Activated T-helper 2 cell treated with anti-CD3 and anti-CD28 coated beads, Interferon-gamma antibody, Interleukin-2, Interleukin-4, amounts not matched to agents 10 μg/mL and 5 μg/mL and 100 μg/mL, durations not matched to agents 14 hours and 24 hours and 36 hours (primary cell): ENCODE measurements at regions of chr2 and their contacts with region 1.

Region 1: GRCh38 chr2:197255543-197255942 is 55.0 kb downstream of the ANKRD44 start:
- DNase-seq: peak; percentile 68
- H3K4me3 Mint-ChIP-seq: peak overlapping the region; percentile 80
- H3K27ac Mint-ChIP-seq: peak overlapping the region; percentile 100
- H3K4me1 Mint-ChIP-seq: peaks cover 64% of the 10 kb centered on the region
- H3K27me3 Mint-ChIP-seq: no peaks in the 10 kb centered on the region

Region 2: DNA sequence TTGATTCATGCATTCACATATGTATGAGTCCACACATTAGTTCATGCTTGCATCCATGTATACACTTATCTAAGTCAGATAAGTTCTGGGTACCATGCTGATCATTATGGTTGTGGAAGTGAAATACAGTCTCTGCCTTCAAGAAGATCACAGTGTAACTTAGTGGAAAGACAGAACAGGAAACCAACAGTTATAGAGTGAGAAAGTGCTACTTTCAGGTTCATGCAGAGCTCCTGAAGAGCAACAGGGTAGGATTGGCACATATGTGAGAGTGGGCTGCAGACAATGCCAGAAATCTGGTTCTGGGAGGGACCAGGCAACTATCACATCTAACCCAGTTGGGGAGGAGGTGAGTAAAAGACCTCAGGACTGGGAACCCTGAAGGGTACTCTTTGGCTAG is 293.7 kb before region 1 on chr2:
- intact Hi-C with region 1: no loop called
- DNase-seq: no peak
- H3K4me3 Mint-ChIP-seq: no peak overlapping the region
- H3K27ac Mint-ChIP-seq: peak overlapping the region; percentile 72
- H3K4me1 Mint-ChIP-seq: peaks cover 34% of the 10 kb centered on the region
- H3K27me3 Mint-ChIP-seq: no peaks in the 10 kb centered on the region

Region 3: DNA sequence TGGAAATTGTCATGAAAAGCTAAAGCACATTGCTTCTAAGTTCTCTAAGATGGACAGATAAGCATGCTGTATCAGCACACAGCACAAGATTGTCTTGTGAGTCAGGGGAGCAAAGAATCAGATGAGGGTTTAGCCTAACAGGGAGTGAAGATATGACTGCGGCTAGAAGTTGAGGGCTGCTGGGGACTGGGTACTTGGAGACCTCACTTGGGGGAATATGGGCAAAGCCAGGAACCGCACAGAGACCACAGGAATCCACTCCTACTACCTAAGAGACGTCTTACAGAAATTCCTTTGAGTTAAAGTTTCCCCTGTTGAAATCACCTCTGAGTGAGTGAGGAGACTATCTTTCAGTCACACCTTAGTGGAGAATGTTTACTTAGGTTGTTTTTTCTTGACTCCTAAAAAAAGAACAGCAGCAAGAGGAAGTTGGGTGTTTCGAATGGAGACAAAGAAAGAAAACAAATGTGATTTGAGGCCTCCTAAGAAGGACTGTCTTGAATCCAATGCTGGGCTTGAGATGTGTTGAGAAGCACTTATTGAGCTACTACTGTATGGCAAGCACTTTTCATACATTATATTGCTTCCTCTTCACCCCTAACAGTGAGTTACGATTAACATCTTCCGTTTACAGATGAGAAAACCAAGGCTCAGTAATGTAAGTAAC is 45.7 kb before region 1 on chr2:
- intact Hi-C with region 1: loop called (anchors 2 kb)
- DNase-seq: peak; percentile 43
- H3K4me3 Mint-ChIP-seq: peak overlapping the region; percentile 60
- H3K27ac Mint-ChIP-seq: peak overlapping the region; percentile 90
- H3K4me1 Mint-ChIP-seq: peaks cover 92% of the 10 kb centered on the region
- H3K27me3 Mint-ChIP-seq: no peaks in the 10 kb centered on the region

Region 4: GRCh38 chr2:197239434-197239833 is 16.1 kb before region 1 on chr2:
- intact Hi-C with region 1: loop called (anchors 1 kb)
- DNase-seq: no peak
- H3K4me3 Mint-ChIP-seq: peak overlapping the region; percentile 77
- H3K27ac Mint-ChIP-seq: peak overlapping the region; percentile 94
- H3K4me1 Mint-ChIP-seq: peaks cover 73% of the 10 kb centered on the region
- H3K27me3 Mint-ChIP-seq: no peaks in the 10 kb centered on the region

Region 5: DNA sequence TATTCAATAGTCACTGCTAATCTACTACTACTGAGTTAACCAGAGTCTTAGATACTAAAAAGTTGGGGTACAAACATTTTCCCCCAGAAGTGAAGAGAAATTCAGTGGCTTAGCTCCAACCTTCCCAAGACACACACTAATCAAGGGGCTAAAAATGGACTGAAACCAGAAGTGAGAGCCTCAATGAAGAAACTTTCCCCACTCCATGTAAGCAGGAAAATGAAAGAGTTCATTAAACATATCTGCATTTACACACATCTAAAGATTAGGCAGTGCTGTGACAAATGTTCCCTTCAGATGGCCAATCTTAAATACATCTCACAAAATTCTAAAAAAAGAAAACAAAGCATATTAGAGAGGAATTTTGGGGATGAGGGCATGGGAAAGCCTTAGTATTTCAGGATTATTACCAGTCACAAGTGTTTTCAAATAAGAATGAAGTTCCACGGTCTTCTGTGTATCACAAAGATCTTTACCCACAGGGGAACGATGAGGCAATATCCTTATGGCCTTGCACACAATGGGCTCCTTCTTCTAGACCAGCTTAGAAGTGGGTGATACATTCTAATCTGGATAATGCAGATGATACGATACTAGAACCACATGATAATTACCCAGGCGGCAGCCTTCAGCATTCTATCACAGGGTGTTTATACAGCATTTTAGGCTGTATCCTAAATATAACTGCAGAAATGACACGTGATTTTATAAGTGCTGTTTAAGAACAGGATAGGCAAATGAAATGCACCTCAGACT is 37.9 kb after region 1 on chr2:
- intact Hi-C with region 1: loop called (anchors 2 kb)
- DNase-seq: no peak
- H3K4me3 Mint-ChIP-seq: peak overlapping the region; percentile 79
- H3K27ac Mint-ChIP-seq: peak overlapping the region; percentile 94
- H3K4me1 Mint-ChIP-seq: peaks cover 80% of the 10 kb centered on the region
- H3K27me3 Mint-ChIP-seq: no peaks in the 10 kb centered on the region